Astrocyte of the cerebellum (primary cell): ENCODE measurements at regions of chr4 and their contacts with region 1.

Region 1: DNA sequence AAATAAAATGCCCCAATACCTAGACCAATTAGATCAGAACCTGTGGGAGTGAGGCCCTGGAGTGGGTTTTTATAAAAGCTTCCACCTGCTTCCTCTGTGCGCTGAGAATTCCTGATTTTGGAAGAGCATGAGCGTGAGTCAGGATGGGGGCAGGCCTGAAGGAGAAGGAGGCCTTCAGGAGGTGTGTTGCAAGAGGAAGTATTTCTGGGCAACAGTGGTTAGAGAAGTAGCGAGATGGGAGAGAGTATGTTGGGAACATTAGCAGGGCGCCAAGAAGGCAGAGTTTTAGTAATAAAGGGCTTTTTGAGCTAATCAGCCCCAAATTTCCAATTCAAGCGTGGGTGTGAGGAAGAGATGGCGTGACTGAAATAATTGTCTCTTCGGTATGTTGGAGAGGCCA is 349.8 kb downstream of the UNC5C start:
- DNase-seq: no peak
- H3K4me3 ChIP-seq: no peak overlapping the region
- CTCF ChIP-seq: no peak

Region 2: DNA sequence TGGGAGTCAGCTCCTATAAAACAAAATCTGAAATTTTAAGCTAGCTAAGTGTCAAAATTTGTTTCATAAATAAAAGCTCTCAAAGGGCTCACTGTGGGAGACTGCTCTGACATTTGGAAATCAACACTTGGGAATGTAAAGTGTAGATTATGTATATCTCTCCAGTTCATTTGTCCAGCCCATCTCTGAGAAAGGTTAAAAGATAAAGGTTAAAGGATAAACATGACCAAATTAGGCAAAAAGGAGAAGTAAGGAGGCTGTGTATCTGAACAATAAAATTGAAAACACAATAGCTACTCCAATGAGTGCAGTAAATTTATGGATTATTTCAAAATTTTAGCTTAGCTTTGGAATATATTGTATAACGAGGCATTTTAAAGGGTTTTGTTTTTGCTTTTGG is 44.9 kb after region 1 on chr4:
- in situ Hi-C with region 1: no loop called
- DNase-seq: no peak
- H3K4me3 ChIP-seq: no peak overlapping the region
- CTCF ChIP-seq: no peak

Region 3: DNA sequence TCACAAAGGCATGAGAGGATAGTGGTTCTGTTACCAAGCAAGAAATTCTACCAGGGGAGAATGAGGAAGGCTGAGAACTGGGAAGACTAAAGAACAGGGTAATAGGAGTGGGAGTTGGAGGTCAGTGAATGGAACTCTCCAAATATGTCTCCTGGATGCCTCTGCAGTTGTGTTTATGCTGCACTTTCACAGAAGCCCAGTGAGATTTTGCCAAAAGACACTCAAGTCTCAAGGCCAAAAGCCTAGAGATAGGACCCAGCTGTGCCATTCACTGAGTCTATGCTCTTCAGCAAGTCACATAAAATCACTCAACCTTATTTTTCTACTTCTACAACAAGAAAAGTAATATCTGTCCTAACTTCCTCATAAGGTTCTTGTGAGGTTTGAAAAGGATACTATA is 64.4 kb after region 1 on chr4:
- in situ Hi-C with region 1: loop called (anchors 5 kb)
- DNase-seq: no peak
- H3K4me3 ChIP-seq: no peak overlapping the region
- CTCF ChIP-seq: no peak

Region 4: DNA sequence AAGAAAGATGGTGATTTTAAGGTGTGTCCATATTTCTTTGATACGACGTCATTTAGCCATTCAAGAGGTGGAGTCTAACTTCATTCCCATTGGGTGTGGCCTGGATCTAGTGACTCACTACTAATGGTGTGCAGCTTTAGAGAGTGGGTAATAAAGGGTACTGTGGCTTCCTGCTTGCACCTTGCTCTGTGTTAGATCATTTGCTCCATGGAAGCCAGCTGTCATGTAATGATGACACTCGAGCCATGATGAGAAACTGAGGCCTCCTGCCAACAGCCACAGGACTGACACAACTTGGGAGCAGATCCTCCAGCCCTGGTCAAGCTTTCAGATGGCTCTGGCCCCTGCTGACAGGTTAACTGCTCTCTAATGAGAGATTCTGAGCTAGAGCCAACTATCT is 267.8 kb after region 1 on chr4:
- in situ Hi-C with region 1: no loop called
- DNase-seq: no peak
- H3K4me3 ChIP-seq: no peak overlapping the region
- CTCF ChIP-seq: no peak